Tibial artery (tissue), 4 donors: ENCODE measurements at regions of chrX and their contacts with region 1.

Region 1: DNA sequence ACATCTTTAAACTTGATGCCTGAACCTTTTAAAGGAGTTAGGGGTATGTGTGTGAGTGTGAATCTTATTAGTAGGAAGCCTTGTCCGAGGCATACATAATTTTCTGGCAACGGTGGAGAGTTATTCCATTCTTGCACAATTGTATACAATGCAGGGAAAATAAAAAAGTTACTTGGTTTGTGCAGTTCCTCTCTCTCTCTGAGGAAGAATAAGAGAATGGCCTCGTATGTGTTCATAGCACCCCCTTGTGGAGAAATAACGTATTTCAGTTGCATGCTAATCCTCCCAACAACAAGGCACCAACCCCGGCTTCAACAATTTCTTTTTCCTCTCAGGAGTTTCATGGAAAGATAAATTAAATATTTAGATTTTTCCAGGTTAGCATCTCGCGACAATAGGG is 33.7 kb upstream of the FGF13 start:
- DNase-seq: no peak
- H3K4me3 ChIP-seq: no peak overlapping the region
- H3K27ac ChIP-seq: no peak overlapping the region
- H3K4me1 ChIP-seq: peaks cover 0 to 13% (median 2%) of the 10 kb centered on the region in 4 donors
- H3K27me3 ChIP-seq: no peaks in the 10 kb centered on the region
- CTCF ChIP-seq: peak; percentile 55 to 59

Region 2: DNA sequence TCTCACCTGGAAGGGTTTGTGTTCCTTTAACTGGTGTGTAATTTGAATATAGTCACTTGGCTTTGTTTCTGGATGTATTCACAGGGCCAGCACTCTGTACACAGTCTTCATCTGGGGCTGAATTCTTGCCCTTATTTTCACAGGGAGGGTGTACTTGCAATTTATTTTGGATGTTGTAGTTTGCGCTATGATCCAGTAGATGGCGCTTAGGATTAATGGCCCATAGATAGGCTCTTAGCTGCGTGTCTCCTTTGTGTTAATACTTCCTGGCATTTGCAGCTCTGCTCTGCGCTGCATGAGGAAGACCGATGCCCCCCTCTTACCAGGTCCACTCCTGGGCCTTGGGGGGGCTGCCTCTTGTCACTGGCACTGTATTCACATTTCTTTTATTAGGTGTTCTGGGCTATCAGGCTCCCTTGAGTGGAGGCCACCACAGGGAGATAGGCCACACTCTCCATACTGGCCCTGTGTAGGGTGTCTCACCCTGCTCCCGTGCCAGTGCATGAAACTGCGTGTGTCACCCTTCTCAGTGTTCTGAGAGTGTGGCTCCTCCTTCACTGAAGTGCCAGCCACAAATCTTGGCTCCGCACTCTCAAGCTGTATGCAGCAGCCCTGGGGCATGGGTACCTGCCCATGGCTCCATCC is 617.0 kb before region 1 on chrX:
- intact Hi-C with region 1: loop called (anchors 5 kb)
- DNase-seq: no peak
- H3K4me3 ChIP-seq: no peak overlapping the region
- H3K27ac ChIP-seq: no peak overlapping the region
- H3K4me1 ChIP-seq: no peaks in the 10 kb centered on the region
- H3K27me3 ChIP-seq: no peaks in the 10 kb centered on the region
- CTCF ChIP-seq: peak in 1 of 2 experiments; percentile 37

Region 3: DNA sequence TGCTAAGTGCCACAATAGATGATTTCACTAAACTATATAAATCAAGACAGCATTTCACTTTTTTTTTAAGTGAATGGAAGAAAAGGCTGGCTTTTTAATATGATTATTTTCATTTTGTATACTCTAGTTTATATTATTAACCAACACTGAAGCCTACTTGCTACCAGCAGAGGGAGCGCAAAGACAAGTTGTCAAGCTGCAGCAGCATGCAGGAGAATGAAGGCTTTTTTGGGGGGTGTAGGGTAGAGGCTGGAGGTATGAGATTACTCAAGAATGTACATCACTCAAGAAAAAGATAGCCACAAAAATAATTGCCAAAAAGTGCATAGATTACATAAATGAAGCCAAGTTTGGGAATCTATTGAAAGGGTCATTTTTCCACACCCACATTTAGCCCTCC is 553.2 kb before region 1 on chrX:
- intact Hi-C with region 1: loop called (anchors 5 kb)
- DNase-seq: no peak
- H3K4me3 ChIP-seq: no peak overlapping the region
- H3K27ac ChIP-seq: no peak overlapping the region
- H3K4me1 ChIP-seq: no peaks in the 10 kb centered on the region
- H3K27me3 ChIP-seq: no peaks in the 10 kb centered on the region
- CTCF ChIP-seq: peak; percentile 28 to 38

Region 4: DNA sequence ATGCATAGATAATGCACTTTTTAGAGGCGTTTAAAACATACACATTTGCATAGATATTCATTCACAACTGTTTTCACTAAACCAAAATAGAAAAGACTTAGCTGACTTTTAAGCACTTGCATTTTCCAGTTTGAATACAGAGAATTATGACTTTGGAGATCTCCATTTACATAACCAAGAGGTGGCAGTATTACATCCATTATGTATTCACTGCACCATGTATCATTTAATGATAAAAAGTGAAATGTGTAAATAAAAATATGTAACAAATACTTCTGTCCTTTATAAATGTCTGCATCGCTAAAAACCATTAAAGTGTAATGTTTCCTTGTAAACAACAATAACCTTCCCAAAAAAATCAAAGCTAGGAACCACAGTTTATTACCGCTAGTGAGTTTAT is 446.9 kb before region 1 on chrX:
- intact Hi-C with region 1: loop called (anchors 5 kb)
- DNase-seq: no peak
- H3K4me3 ChIP-seq: no peak overlapping the region
- H3K27ac ChIP-seq: no peak overlapping the region
- H3K4me1 ChIP-seq: no peaks in the 10 kb centered on the region
- H3K27me3 ChIP-seq: no peaks in the 10 kb centered on the region
- CTCF ChIP-seq: peak; percentile 23 to 26

Region 5: GRCh38 chrX:139170526-139171173 is 425.5 kb after region 1 on chrX:
- intact Hi-C with region 1: no loop called
- DNase-seq: no peak
- H3K4me3 ChIP-seq: no peak overlapping the region
- H3K27ac ChIP-seq: no peak overlapping the region
- H3K4me1 ChIP-seq: no peaks in the 10 kb centered on the region
- H3K27me3 ChIP-seq: no peaks in the 10 kb centered on the region
- CTCF ChIP-seq: no peak